Spleen (tissue), 13 donors: ENCODE measurements at regions of chr15 and their contacts with region 1.

Region 1: GRCh38 chr15:65856821-65857455 is 12.4 kb upstream of the RAB11A start:
- DNase-seq: peak; percentile 90
- H3K4me3 ChIP-seq: no peak overlapping the region
- H3K27ac ChIP-seq: no peak overlapping the region
- H3K4me1 ChIP-seq: peaks cover 0 to 17% (median 4%) of the 10 kb centered on the region in 6 donors
- H3K27me3 ChIP-seq: no peaks in the 10 kb centered on the region
- CTCF ChIP-seq: peak; percentile 75 to 94 (median 86)
- POLR2A ChIP-seq: no peak

Region 2: DNA sequence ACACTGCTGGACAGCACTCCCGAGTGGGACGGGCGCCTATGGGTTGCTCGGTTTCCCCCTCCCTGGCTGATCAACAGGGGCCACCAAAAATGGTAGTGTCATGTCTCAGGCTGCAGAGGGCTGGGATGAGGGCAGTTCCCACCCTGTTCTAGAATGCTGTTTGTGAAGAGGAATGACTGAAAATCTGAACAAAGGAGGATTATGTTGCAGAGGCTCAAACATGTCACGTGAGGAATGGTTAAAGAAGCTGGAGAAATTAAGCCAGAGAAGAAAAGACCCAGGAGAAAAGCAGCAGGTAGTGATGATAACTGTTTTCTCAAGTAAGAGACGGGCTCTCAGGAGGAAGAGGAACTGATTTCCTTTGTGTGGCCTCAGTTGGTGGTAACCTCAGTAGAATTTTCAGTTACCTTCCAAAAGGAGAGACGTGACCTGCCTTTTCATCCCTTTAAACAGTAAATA is 877.7 kb before region 1 on chr15:
- intact Hi-C with region 1: no loop called
- DNase-seq: no peak
- H3K4me3 ChIP-seq: no peak overlapping the region
- H3K27ac ChIP-seq: no peak overlapping the region
- H3K4me1 ChIP-seq: peaks cover 0 to 30% (median 15%) of the 10 kb centered on the region in 6 donors
- H3K27me3 ChIP-seq: no peaks in the 10 kb centered on the region
- CTCF ChIP-seq: no peak
- POLR2A ChIP-seq: no peak

Region 3: DNA sequence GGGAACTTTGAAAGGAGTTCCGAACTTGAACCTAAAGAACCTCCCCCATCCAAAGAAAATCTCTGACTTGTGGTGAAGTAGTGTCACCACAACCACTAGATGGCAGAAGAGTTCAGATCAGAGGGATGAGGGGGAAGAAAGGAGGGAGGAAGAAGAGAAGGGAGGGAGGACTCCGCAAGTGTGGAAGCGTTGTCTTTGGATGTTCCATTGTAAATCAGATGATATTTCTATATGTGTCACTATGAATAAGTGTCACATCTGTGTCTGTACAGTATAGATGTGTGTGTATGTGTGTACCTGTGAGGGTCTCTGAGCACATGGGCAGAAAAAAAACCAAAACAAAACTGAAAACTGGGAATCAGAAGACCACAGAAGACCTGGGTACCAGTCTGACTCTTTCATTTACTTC is 218.3 kb before region 1 on chr15:
- intact Hi-C with region 1: loop called (anchors 10 kb)
- DNase-seq: no peak
- H3K4me3 ChIP-seq: no peak overlapping the region
- H3K27ac ChIP-seq: no peak overlapping the region
- H3K4me1 ChIP-seq: peaks cover 0 to 20% (median 10%) of the 10 kb centered on the region in 6 donors
- H3K27me3 ChIP-seq: no peaks in the 10 kb centered on the region
- CTCF ChIP-seq: peak; percentile 57 to 88 (median 76)
- POLR2A ChIP-seq: no peak